Activated CD4-positive, alpha-beta T cell treated with anti-CD3 and anti-CD28 coated beads for 36 hours (primary cell): ENCODE measurements at regions of chr18 and their contacts with region 1.

Region 1: GRCh38 chr18:26073758-26074157 is 16.7 kb downstream of the SS18 start:
- DNase-seq: no peak
- ATAC-seq: no peak
- H3K4me3 Mint-ChIP-seq: no peak overlapping the region
- H3K27ac Mint-ChIP-seq: no peak overlapping the region
- H3K4me1 Mint-ChIP-seq: peaks cover 18% of the 10 kb centered on the region
- H3K27me3 Mint-ChIP-seq: no peaks in the 10 kb centered on the region

Region 2: DNA sequence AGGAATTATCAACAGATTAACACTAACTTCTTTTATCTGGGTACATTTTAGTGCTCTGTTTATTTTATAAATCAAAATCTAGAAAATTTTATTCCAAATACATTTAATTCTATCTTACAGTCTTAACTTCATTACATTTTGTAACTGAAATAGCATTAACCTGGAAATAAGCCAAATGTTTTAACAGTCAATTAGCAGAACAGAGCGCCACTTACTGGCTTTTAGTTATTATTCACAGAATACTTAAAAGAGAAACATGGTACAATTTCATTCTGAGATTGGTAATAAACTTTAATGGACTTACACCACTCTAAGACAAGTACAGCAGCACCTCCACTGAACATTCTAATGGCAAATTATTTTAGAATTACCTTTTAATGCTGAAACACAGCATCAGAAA is 21.9 kb before region 1 on chr18:
- CTCF ChIA-PET with region 1: no interaction called
- POLR2A ChIA-PET with region 1: no interaction called
- intact Hi-C with region 1: loop called in 1 of 2 experiments (anchors 2 kb)
- DNase-seq: no peak
- ATAC-seq: no peak
- H3K4me3 Mint-ChIP-seq: no peak overlapping the region
- H3K27ac Mint-ChIP-seq: no peak overlapping the region
- H3K4me1 Mint-ChIP-seq: peaks cover 2% of the 10 kb centered on the region
- H3K27me3 Mint-ChIP-seq: no peaks in the 10 kb centered on the region